CD8-positive, alpha-beta T cell (primary cell): ENCODE measurements at regions of chr1 and their contacts with region 1.

Region 1: DNA sequence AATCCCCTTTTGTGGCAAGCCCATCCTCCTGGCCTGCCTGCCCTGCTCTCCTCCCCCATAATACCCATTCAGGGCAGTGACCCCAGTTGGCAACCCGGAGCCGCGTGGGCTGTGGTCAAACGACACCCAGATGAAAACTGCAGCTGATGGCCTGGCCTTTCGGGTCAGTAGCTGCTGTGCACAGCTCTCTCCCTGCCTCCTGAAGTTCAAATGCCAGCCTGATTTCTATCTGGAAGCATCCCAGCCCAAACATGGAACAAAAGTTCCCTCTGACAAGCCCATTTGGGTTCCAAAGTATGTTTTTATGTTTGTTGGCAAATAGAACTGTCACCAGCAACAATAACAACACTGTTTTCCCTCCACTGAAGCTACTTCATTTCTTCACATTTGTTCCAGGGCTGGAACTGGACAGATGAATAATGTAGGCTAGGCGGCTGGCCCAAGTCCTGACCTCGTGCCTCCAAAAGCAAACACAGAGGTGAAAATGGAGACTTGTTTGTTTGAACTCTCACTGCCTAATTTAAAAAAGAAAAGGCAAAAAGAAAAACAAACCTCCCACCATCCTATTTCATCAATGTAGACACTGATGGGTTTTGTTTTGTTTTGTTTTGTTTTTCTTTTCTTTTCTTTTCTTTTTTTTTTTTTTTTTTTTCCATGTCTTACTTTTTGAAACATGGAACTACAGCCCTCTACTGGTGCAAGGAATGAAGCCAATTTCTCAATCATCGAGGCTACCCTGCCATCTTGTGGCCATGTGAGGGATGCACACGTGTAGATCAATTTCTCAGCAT is 179.0 kb downstream of the ADSS2 start:
- DNase-seq: peak; percentile 42 to 87 (median 71)
- ATAC-seq: peak; percentile 97
- H3K4me3 ChIP-seq: no peak overlapping the region
- H3K4me3 Mint-ChIP-seq: no peak overlapping the region
- H3K27ac ChIP-seq: no peak overlapping the region
- H3K27ac Mint-ChIP-seq: no peak overlapping the region
- H3K4me1 ChIP-seq: no peaks in the 10 kb centered on the region
- H3K4me1 Mint-ChIP-seq: peaks cover 12% of the 10 kb centered on the region
- H3K27me3 ChIP-seq: no peaks in the 10 kb centered on the region
- H3K27me3 Mint-ChIP-seq: no peaks in the 10 kb centered on the region
- CTCF ChIP-seq: peak; percentile 100

Region 2: GRCh38 chr1:242467556-242468145 is 1805.0 kb before region 1 on chr1:
- CTCF ChIA-PET with region 1: no interaction called
- POLR2A ChIA-PET with region 1: no interaction called
- intact Hi-C with region 1: loop called in 1 of 2 experiments (anchors 10 kb)
- DNase-seq: peak in 3 of 9 experiments; percentile 14 to 25 (median 24)
- ATAC-seq: no peak
- H3K4me3 ChIP-seq: no peak overlapping the region
- H3K4me3 Mint-ChIP-seq: no peak overlapping the region
- H3K27ac ChIP-seq: no peak overlapping the region
- H3K27ac Mint-ChIP-seq: no peak overlapping the region
- H3K4me1 ChIP-seq: no peaks in the 10 kb centered on the region
- H3K4me1 Mint-ChIP-seq: no peaks in the 10 kb centered on the region
- H3K27me3 ChIP-seq: no peaks in the 10 kb centered on the region
- H3K27me3 Mint-ChIP-seq: peaks cover 7% of the 10 kb centered on the region
- CTCF ChIP-seq: no peak

Region 3: DNA sequence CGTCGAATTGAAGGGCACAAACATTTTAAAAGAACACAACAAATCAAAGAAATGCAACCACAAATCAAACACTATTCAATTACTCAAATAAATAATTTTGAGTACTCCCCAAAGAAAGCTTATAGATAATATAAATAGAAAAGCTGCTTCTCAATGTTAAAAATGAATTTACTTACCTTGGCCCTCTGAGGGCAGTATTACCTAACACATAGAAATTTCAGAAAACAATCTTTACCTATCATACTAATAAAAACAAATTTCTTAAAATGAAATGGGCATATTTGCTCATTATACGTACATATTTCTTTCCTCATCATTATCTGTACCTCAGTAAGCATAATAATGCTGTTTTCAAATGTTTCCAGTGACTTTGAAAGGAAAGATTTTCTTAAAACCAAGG is 564.5 kb before region 1 on chr1:
- CTCF ChIA-PET with region 1: interaction called, 3 read pairs
- POLR2A ChIA-PET with region 1: no interaction called
- intact Hi-C with region 1: loop called (anchors 1 kb)
- DNase-seq: peak in 2 of 9 experiments; percentile 18 to 36
- ATAC-seq: no peak
- H3K4me3 ChIP-seq: no peak overlapping the region
- H3K4me3 Mint-ChIP-seq: no peak overlapping the region
- H3K27ac ChIP-seq: no peak overlapping the region
- H3K27ac Mint-ChIP-seq: no peak overlapping the region
- H3K4me1 ChIP-seq: no peaks in the 10 kb centered on the region
- H3K4me1 Mint-ChIP-seq: peaks cover 23% of the 10 kb centered on the region
- H3K27me3 ChIP-seq: no peaks in the 10 kb centered on the region
- H3K27me3 Mint-ChIP-seq: no peaks in the 10 kb centered on the region
- CTCF ChIP-seq: peak; percentile 60

Region 4: DNA sequence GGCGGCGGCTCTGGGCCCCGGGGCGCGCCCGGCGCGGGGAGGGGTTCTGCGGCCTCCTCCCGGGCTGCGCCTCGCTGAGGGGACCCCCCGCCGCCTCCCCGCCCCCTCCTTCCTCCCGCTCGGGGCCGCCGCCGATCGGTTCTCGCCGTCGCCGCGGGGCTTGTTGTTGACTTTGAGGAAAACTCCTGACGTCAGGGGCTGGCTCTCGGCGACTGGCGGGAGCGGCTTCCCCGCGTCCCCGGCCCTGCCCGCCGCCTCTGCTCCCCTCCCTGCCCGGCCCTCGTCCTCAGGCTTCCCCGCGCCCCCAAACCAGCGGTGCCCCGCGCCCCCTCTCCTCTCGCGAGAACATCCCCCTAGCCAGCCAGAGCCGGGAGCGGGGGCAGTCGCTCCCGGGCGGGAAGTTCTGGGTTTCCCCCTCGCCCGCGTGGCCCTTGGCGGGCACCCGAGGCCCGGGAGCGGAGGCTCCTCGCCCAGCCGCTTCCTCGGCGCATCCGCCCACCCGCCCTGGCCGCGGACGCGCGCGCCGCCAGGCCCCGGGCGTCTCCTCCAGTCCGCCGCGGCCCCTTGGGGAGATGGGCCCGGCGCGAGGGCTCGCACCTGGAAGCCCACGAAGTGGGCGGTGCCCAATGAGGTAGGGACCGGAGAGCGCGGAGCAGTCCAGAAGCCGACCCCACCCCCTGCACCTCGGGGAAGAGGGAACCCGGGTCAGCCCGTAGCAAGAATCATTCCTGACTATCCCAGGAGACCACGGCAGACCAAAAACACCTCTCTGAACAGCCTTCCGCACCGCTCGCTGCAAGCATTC is 422.0 kb before region 1 on chr1:
- CTCF ChIA-PET with region 1: no interaction called
- POLR2A ChIA-PET with region 1: no interaction called
- intact Hi-C with region 1: loop called (anchors 5 kb)
- DNase-seq: peak in 8 of 9 experiments; percentile 71 to 92 (median 84)
- ATAC-seq: peak; percentile 44
- H3K4me3 ChIP-seq: peak overlapping the region; percentile 53 to 66
- H3K4me3 Mint-ChIP-seq: peak overlapping the region; percentile 93
- H3K27ac ChIP-seq: peak overlapping the region; percentile 80 to 82
- H3K27ac Mint-ChIP-seq: peak overlapping the region; percentile 96
- H3K4me1 ChIP-seq: peaks cover 24% of the 10 kb centered on the region
- H3K4me1 Mint-ChIP-seq: peaks cover 38% of the 10 kb centered on the region
- H3K27me3 ChIP-seq: no peaks in the 10 kb centered on the region
- H3K27me3 Mint-ChIP-seq: peaks cover 2% of the 10 kb centered on the region
- CTCF ChIP-seq: no peak

Region 5: GRCh38 chr1:243946946-243947345 is 325.7 kb before region 1 on chr1:
- CTCF ChIA-PET with region 1: interaction called, 9 read pairs
- POLR2A ChIA-PET with region 1: no interaction called
- intact Hi-C with region 1: loop called (anchors 1 to 2 kb)
- DNase-seq: peak in 8 of 9 experiments; percentile 5 to 63 (median 42)
- ATAC-seq: peak; percentile 67
- H3K4me3 ChIP-seq: no peak overlapping the region
- H3K4me3 Mint-ChIP-seq: no peak overlapping the region
- H3K27ac ChIP-seq: no peak overlapping the region
- H3K27ac Mint-ChIP-seq: no peak overlapping the region
- H3K4me1 ChIP-seq: no peaks in the 10 kb centered on the region
- H3K4me1 Mint-ChIP-seq: no peaks in the 10 kb centered on the region
- H3K27me3 ChIP-seq: no peaks in the 10 kb centered on the region
- H3K27me3 Mint-ChIP-seq: peaks cover under 1% of the 10 kb centered on the region
- CTCF ChIP-seq: peak; percentile 60

Region 6: GRCh38 chr1:244074559-244075171 is 198.0 kb before region 1 on chr1:
- CTCF ChIA-PET with region 1: interaction called, 5 read pairs
- POLR2A ChIA-PET with region 1: no interaction called
- intact Hi-C with region 1: loop called in 1 of 2 experiments (anchors 1 kb)
- DNase-seq: peak; percentile 47 to 92 (median 74)
- ATAC-seq: peak; percentile 90
- H3K4me3 ChIP-seq: peak overlapping the region; percentile 38 to 41
- H3K4me3 Mint-ChIP-seq: peak overlapping the region; percentile 80
- H3K27ac ChIP-seq: peak overlapping the region; percentile 66 to 67
- H3K27ac Mint-ChIP-seq: peak overlapping the region; percentile 98
- H3K4me1 ChIP-seq: peaks cover 31% of the 10 kb centered on the region
- H3K4me1 Mint-ChIP-seq: peaks cover 45% of the 10 kb centered on the region
- H3K27me3 ChIP-seq: no peaks in the 10 kb centered on the region
- H3K27me3 Mint-ChIP-seq: no peaks in the 10 kb centered on the region
- CTCF ChIP-seq: no peak

Region 7: GRCh38 chr1:244128591-244129383 is 143.9 kb before region 1 on chr1:
- CTCF ChIA-PET with region 1: no interaction called
- POLR2A ChIA-PET with region 1: no interaction called
- intact Hi-C with region 1: no loop called
- DNase-seq: no peak
- ATAC-seq: no peak
- H3K4me3 ChIP-seq: no peak overlapping the region
- H3K4me3 Mint-ChIP-seq: no peak overlapping the region
- H3K27ac ChIP-seq: no peak overlapping the region
- H3K27ac Mint-ChIP-seq: no peak overlapping the region
- H3K4me1 ChIP-seq: no peaks in the 10 kb centered on the region
- H3K4me1 Mint-ChIP-seq: peaks cover 11% of the 10 kb centered on the region
- H3K27me3 ChIP-seq: no peaks in the 10 kb centered on the region
- H3K27me3 Mint-ChIP-seq: peaks cover 4% of the 10 kb centered on the region
- CTCF ChIP-seq: no peak

Region 8: GRCh38 chr1:244239261-244239770 is 33.4 kb before region 1 on chr1:
- CTCF ChIA-PET with region 1: no interaction called
- POLR2A ChIA-PET with region 1: no interaction called
- intact Hi-C with region 1: no loop called
- DNase-seq: no peak
- ATAC-seq: no peak
- H3K4me3 ChIP-seq: no peak overlapping the region
- H3K4me3 Mint-ChIP-seq: no peak overlapping the region
- H3K27ac ChIP-seq: no peak overlapping the region
- H3K27ac Mint-ChIP-seq: peak overlapping the region; percentile 46
- H3K4me1 ChIP-seq: peaks cover 5% of the 10 kb centered on the region
- H3K4me1 Mint-ChIP-seq: peaks cover 18% of the 10 kb centered on the region
- H3K27me3 ChIP-seq: no peaks in the 10 kb centered on the region
- H3K27me3 Mint-ChIP-seq: no peaks in the 10 kb centered on the region
- CTCF ChIP-seq: no peak

Region 9: GRCh38 chr1:244296447-244296846 is 23.8 kb after region 1 on chr1:
- CTCF ChIA-PET with region 1: interaction called, 18 read pairs
- POLR2A ChIA-PET with region 1: no interaction called
- intact Hi-C with region 1: loop called (anchors 1 kb)
- DNase-seq: no peak
- ATAC-seq: no peak
- H3K4me3 ChIP-seq: no peak overlapping the region
- H3K4me3 Mint-ChIP-seq: no peak overlapping the region
- H3K27ac ChIP-seq: no peak overlapping the region
- H3K27ac Mint-ChIP-seq: no peak overlapping the region
- H3K4me1 ChIP-seq: peaks cover 4% of the 10 kb centered on the region
- H3K4me1 Mint-ChIP-seq: peaks cover 13% of the 10 kb centered on the region
- H3K27me3 ChIP-seq: no peaks in the 10 kb centered on the region
- H3K27me3 Mint-ChIP-seq: no peaks in the 10 kb centered on the region
- CTCF ChIP-seq: no peak